IMR-90 (cell line): ENCODE measurements at regions of chr1 and their contacts with region 1.

Region 1: GRCh38 chr1:6108937-6109614 is 63.4 kb downstream of the KCNAB2 start:
- DNase-seq: peak; percentile 40
- ATAC-seq: peak; percentile 94
- H3K4me3 ChIP-seq: no peak overlapping the region
- H3K27ac ChIP-seq: no peak overlapping the region
- H3K4me1 ChIP-seq: no peaks in the 10 kb centered on the region
- H3K27me3 ChIP-seq: peaks cover 17% of the 10 kb centered on the region; the same call in 1 of the 2 replicates
- CTCF ChIP-seq: peak; percentile 56
- POLR2A ChIP-seq: no peak
- RAD21 ChIP-seq: peak; percentile 62

Region 2: GRCh38 chr1:6171548-6172119 is 62.6 kb after region 1 on chr1:
- CTCF ChIA-PET with region 1: no interaction called
- POLR2A ChIA-PET with region 1: no interaction called
- dilution Hi-C with region 1: no loop called
- in situ Hi-C with region 1: no loop called
- intact Hi-C with region 1: loop called (anchors 2 kb)
- DNase-seq: no peak
- ATAC-seq: peak; percentile 77
- H3K4me3 ChIP-seq: no peak overlapping the region
- H3K27ac ChIP-seq: no peak overlapping the region
- H3K4me1 ChIP-seq: no peaks in the 10 kb centered on the region
- H3K27me3 ChIP-seq: peaks cover 29% of the 10 kb centered on the region; the same call in 1 of the 2 replicates
- CTCF ChIP-seq: peak; percentile 27
- POLR2A ChIP-seq: no peak
- RAD21 ChIP-seq: peak; percentile 24

Region 3: DNA sequence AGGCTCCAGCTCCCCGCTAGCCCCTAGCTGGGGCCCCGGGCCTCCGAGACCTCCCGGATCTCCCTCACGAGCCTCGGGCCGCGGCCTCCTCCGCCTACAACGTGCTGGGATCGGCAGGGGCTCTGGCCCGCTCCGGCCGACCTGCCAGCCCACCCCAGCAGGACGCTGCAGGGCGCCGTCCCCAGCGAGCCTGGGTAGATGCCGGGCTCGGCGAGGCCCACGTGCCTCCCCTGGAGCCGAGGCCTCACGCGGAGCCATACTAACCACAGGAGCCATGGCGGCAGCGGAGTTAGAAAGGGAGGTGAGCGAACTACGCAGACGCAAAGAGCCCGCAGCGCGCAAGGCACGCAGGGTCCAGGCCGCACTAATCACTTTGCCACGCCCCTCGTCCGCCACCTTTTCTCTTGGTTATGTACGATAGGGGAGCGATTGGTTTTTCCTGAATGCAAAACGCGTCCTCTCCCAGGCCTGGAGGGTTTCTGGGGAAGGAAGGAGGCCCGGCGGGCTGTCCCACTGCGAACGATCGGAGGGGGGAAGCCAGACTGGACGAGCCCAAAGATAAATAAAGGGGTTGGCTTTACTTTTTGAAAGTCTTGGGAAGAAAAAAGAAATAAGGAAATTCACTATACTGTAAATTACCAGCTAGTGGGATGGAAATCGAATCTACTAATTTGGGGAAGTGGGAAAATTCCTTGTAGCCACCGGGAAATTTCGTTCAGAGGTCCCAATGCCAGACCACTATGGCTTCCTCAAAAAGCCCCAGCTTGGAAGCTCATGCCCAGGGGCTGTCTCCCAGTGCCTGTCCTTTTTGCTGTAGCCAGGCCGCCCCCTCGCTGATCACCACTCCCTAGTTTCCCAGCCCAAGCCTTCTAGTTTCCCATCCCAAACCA is 90.5 kb after region 1 on chr1 and contains the start of gene RPL22:
- CTCF ChIA-PET with region 1: no interaction called
- POLR2A ChIA-PET with region 1: no interaction called
- dilution Hi-C with region 1: no loop called
- in situ Hi-C with region 1: no loop called
- intact Hi-C with region 1: no loop called
- DNase-seq: peak; percentile 99
- ATAC-seq: peak; percentile 98
- H3K4me3 ChIP-seq: peak within 1 kb of the TSS; percentile 70
- H3K27ac ChIP-seq: peak within 1 kb of the TSS; percentile 75
- H3K4me1 ChIP-seq: peaks cover 4% of the 10 kb centered on the region; the same call in 1 of the 2 replicates
- H3K27me3 ChIP-seq: no peaks in the 10 kb centered on the region
- CTCF ChIP-seq: no peak
- POLR2A ChIP-seq: peak; percentile 86
- RAD21 ChIP-seq: no peak
- total RNA-seq, gene RPL22: 26.2 and 71.9 TPM in 2 replicates